PC-9 (cell line): ENCODE measurements at regions of chr21 and their contacts with region 1.

Region 1: DNA sequence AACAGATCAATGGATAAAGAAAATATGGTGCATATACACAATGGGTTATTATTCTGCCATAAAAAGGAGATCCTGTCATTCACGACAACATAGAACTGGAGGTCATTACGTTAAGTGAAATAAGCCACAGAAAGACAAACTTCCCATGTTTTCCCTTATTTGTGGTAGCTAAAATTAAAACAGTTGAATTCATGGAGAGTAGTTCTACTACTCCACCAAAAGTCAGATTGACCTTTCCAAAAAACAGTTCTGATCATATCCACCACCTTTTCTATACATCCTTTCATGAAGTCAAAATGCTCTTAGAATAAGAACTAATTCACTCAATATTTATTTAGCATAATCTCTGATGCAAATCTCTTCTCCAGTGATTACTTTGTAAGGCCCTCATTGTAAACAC is 182.3 kb upstream of the USP25 start:
- DNase-seq: no peak
- H3K4me3 ChIP-seq: no peak overlapping the region
- H3K27ac ChIP-seq: no peak overlapping the region
- H3K4me1 ChIP-seq: no peaks in the 10 kb centered on the region
- H3K27me3 ChIP-seq: no peaks in the 10 kb centered on the region
- CTCF ChIP-seq: no peak

Region 2: GRCh38 chr21:15422783-15423182 is 124.7 kb before region 1 on chr21:
- CTCF ChIA-PET with region 1: interaction called, 13 read pairs
- POLR2A ChIA-PET with region 1: no interaction called
- intact Hi-C with region 1: no loop called
- DNase-seq: peak in 1 of 2 experiments; percentile 7
- H3K4me3 ChIP-seq: no peak overlapping the region
- H3K27ac ChIP-seq: no peak overlapping the region
- H3K4me1 ChIP-seq: no peaks in the 10 kb centered on the region
- H3K27me3 ChIP-seq: no peaks in the 10 kb centered on the region
- CTCF ChIP-seq: no peak